ENCODE measurements at regions of chr10 and their contacts with region 1.

Region 1: GRCh38 chr10:60943316-60944158 is 448 bp downstream of the RHOBTB1 start:
- DNase-seq: peak; percentile 60
- ATAC-seq: peak; percentile 48
- H3K4me3 ChIP-seq: peak overlapping the region; percentile 79
- H3K27ac ChIP-seq: peak overlapping the region; percentile 60
- H3K4me1 ChIP-seq: peaks cover 21% of the 10 kb centered on the region
- H3K27me3 ChIP-seq: no peaks in the 10 kb centered on the region
- CTCF ChIP-seq: no peak

Region 2: GRCh38 chr10:60480865-60481563 is 462.5 kb before region 1 on chr10:
- CTCF ChIA-PET with region 1: no interaction called
- POLR2A ChIA-PET with region 1: interaction called, 13 read pairs
- intact Hi-C with region 1: no loop called
- DNase-seq: peak; percentile 100
- ATAC-seq: peak; percentile 82
- H3K4me3 ChIP-seq: peak overlapping the region; percentile 23
- H3K27ac ChIP-seq: peak overlapping the region; percentile 80
- H3K4me1 ChIP-seq: peaks cover 40% of the 10 kb centered on the region
- H3K27me3 ChIP-seq: no peaks in the 10 kb centered on the region
- CTCF ChIP-seq: no peak

Region 3: GRCh38 chr10:60892571-60892970 is 51.0 kb before region 1 on chr10:
- CTCF ChIA-PET with region 1: no interaction called
- POLR2A ChIA-PET with region 1: no interaction called
- intact Hi-C with region 1: loop called (anchors 2 kb)
- DNase-seq: no peak
- ATAC-seq: no peak
- H3K4me3 ChIP-seq: no peak overlapping the region
- H3K27ac ChIP-seq: no peak overlapping the region
- H3K4me1 ChIP-seq: peaks cover 13% of the 10 kb centered on the region
- H3K27me3 ChIP-seq: no peaks in the 10 kb centered on the region
- CTCF ChIP-seq: no peak

Region 4: GRCh38 chr10:61066661-61067353 is 123.3 kb after region 1 on chr10:
- CTCF ChIA-PET with region 1: no interaction called
- POLR2A ChIA-PET with region 1: no interaction called
- intact Hi-C with region 1: no loop called
- DNase-seq: no peak
- ATAC-seq: no peak
- H3K4me3 ChIP-seq: no peak overlapping the region
- H3K27ac ChIP-seq: no peak overlapping the region
- H3K4me1 ChIP-seq: no peaks in the 10 kb centered on the region
- H3K27me3 ChIP-seq: peaks cover 42% of the 10 kb centered on the region
- CTCF ChIP-seq: no peak

Region 5: GRCh38 chr10:61164458-61165160 is 221.1 kb after region 1 on chr10:
- CTCF ChIA-PET with region 1: no interaction called
- POLR2A ChIA-PET with region 1: no interaction called
- intact Hi-C with region 1: no loop called
- DNase-seq: peak; percentile 88
- ATAC-seq: peak; percentile 80
- H3K4me3 ChIP-seq: no peak overlapping the region
- H3K27ac ChIP-seq: no peak overlapping the region
- H3K4me1 ChIP-seq: peaks cover 8% of the 10 kb centered on the region; the same call in 1 of the 2 replicates
- H3K27me3 ChIP-seq: no peaks in the 10 kb centered on the region
- CTCF ChIP-seq: no peak